ENCODE measurements at regions of chr4 and their contacts with region 1.

Region 1: DNA sequence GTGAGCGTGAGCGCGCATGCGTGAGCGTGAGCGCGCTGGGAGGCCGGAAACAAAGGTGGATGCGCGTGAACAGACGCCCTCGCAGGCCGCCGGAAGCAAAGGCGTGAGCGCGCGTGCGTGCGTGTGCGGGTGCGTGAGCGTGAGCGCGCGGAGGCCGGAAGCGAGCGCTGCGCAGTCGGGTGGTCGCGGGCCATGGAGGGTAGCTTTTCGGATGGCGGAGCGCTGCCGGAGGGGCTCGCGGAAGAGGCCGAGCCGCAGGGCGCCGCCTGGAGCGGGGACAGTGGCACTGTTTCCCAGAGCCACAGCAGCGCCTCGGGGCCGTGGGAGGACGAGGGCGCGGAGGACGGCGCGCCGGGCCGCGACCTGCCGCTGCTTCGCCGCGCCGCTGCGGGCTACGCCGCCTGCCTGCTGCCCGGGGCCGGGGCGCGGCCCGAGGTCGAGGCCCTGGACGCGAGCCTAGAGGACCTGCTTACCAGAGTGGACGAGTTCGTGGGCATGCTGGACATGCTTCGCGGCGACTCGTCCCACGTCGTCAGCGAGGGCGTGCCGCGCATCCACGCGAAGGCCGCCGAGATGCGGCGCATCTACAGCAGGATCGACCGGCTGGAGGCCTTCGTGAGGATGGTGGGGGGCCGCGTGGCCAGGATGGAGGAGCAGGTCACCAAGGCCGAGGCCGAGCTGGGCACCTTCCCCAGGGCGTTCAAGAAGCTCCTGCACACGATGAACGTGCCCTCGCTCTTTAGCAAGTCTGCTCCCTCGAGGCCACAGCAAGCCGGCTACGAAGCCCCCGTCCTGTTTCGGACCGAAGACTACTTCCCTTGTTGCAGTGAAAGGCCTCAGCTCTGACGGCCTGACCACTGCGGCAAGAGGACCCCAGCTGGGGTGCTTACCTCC is at the start of gene BLOC1S4:
- DNase-seq: peak; percentile 95
- ATAC-seq: peak; percentile 80
- H3K4me3 Mint-ChIP-seq: peak within 1 kb of the TSS; percentile 90
- H3K27ac Mint-ChIP-seq: peak within 1 kb of the TSS; percentile 95
- H3K4me1 Mint-ChIP-seq: peaks cover 25% of the 10 kb centered on the region
- H3K27me3 Mint-ChIP-seq: peaks cover 2% of the 10 kb centered on the region
- total RNA-seq, gene BLOC1S4: 23.9 to 24.3 TPM

Region 2: GRCh38 chr4:6688879-6689505 is 27.3 kb before region 1 on chr4:
- POLR2A ChIA-PET with region 1: interaction called, 28 read pairs
- DNase-seq: peak; percentile 82
- ATAC-seq: peak; percentile 77
- H3K4me3 Mint-ChIP-seq: peak overlapping the region; percentile 87
- H3K27ac Mint-ChIP-seq: peak overlapping the region; percentile 92
- H3K4me1 Mint-ChIP-seq: peaks cover 61% of the 10 kb centered on the region
- H3K27me3 Mint-ChIP-seq: no peaks in the 10 kb centered on the region

Region 3: DNA sequence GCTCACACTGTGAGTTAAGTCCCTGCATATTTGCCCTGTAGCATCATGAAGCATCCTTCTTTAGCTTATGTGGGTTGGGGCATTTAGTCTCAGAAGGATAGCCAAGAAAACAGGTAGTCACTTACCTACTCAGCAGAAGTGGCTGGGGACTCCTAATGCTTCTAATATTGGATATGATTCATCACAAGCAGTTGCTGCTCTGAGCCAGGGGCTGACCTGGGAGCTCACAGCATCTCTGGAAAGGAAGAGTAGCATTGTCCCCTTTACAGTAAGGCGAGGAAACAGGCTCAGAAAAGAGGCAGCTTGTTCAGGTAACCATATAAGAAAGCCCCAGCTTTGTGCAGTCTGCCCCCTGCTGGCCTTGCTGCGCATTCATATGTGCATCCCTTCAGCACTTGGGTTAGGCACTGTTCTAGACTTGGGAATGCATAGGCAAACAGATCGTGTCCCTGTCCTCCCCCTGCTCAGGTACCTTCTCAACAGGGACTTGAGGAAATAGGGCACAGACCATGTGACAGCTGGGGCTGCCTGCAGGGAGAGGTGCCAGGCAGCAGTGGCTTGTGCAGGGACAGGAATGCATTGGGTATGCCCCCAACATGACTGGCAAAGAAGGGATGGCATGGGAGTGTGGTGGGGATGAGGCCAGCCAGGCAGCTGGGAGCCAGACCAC is 157.7 kb after region 1 on chr4:
- POLR2A ChIA-PET with region 1: interaction called, 11 read pairs
- DNase-seq: peak; percentile 82
- ATAC-seq: peak; percentile 87
- H3K4me3 Mint-ChIP-seq: no peak overlapping the region
- H3K27ac Mint-ChIP-seq: no peak overlapping the region
- H3K4me1 Mint-ChIP-seq: peaks cover 10% of the 10 kb centered on the region
- H3K27me3 Mint-ChIP-seq: no peaks in the 10 kb centered on the region

Measured in activated naive CD8-positive, alpha-beta T cell treated with anti-CD3 and anti-CD28 coated beads, Interleukin-2, amount 10 ng/mL, durations not matched to agents 7 days and 5 days (primary cell).